Ascending aorta (tissue), 2 donors: ENCODE measurements at regions of chr20 and their contacts with region 1.

Region 1: GRCh38 chr20:36550797-36551299 is 9.5 kb downstream of the MYL9 start:
- DNase-seq: no peak
- H3K4me3 ChIP-seq: no peak overlapping the region
- H3K27ac ChIP-seq: peak overlapping the region; percentile 72 to 75
- H3K4me1 ChIP-seq: peaks cover 5 to 30% of the 10 kb centered on the region in 2 donors
- H3K27me3 ChIP-seq: no peaks in the 10 kb centered on the region
- CTCF ChIP-seq: no peak

Region 2: GRCh38 chr20:36248836-36249235 is 302.0 kb before region 1 on chr20:
- intact Hi-C with region 1: no loop called
- DNase-seq: no peak
- H3K4me3 ChIP-seq: no peak overlapping the region
- H3K27ac ChIP-seq: no peak overlapping the region
- H3K4me1 ChIP-seq: no peaks in the 10 kb centered on the region
- H3K27me3 ChIP-seq: no peaks in the 10 kb centered on the region
- CTCF ChIP-seq: no peak

Region 3: GRCh38 chr20:36573103-36573794 is 22.4 kb after region 1 on chr20 and contains the start of gene TGIF2:
- intact Hi-C with region 1: loop called (anchors 2 kb)
- DNase-seq: peak; percentile 49 to 93
- H3K4me3 ChIP-seq: peak within 1 kb of the TSS; percentile 63 to 79
- H3K27ac ChIP-seq: peak within 1 kb of the TSS; percentile 83 to 90
- H3K4me1 ChIP-seq: peaks cover 0 to 20% of the 10 kb centered on the region in 2 donors
- H3K27me3 ChIP-seq: no peaks in the 10 kb centered on the region
- CTCF ChIP-seq: no peak
- total RNA-seq, gene TGIF2: 29.8 TPM

Region 4: GRCh38 chr20:36591854-36592641 is 41.2 kb after region 1 on chr20:
- intact Hi-C with region 1: loop called (anchors 5 kb)
- DNase-seq: no peak
- H3K4me3 ChIP-seq: no peak overlapping the region
- H3K27ac ChIP-seq: no peak overlapping the region
- H3K4me1 ChIP-seq: no peaks in the 10 kb centered on the region
- H3K27me3 ChIP-seq: no peaks in the 10 kb centered on the region
- CTCF ChIP-seq: peak; percentile 14 to 48 (median 41)

Region 5: GRCh38 chr20:36754656-36755222 is 203.9 kb after region 1 on chr20:
- intact Hi-C with region 1: loop called (anchors 1 kb)
- DNase-seq: peak in 1 of 2 donors; percentile 67
- H3K4me3 ChIP-seq: no peak overlapping the region
- H3K27ac ChIP-seq: no peak overlapping the region
- H3K4me1 ChIP-seq: no peaks in the 10 kb centered on the region
- H3K27me3 ChIP-seq: no peaks in the 10 kb centered on the region
- CTCF ChIP-seq: peak; percentile 81 to 87 (median 84)

Region 6: DNA sequence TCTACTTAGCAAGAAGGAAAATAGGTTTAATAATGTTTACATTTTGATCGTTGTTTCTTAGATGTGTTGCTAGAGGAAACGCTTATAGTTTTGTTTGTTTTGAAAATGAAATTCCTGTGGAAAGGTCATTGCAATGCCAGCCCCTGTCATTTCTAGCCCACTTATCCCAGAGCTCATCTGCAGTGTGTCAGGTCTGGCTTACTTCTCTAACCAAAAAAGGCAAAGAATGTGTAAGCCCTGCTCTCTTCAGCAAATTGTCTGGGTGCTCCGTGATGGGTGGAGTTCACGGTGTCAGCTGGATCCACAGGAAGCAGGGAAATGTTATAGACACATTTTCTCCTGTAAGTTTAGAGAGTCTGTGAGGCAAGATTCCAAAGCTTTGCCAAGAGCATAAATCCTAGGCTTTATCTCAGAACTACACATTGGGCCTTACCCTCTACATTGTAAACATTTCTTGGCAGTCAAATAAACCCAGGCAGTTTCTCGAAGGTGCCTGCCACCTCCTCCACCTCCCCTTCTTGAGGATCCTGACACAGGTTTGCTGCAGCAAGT is 1533.6 kb after region 1 on chr20:
- intact Hi-C with region 1: no loop called
- DNase-seq: no peak
- H3K4me3 ChIP-seq: peak overlapping the region in 1 of 2 donors; percentile 24
- H3K27ac ChIP-seq: peak overlapping the region; percentile 70 to 72
- H3K4me1 ChIP-seq: peaks cover 12 to 17% of the 10 kb centered on the region in 2 donors
- H3K27me3 ChIP-seq: no peaks in the 10 kb centered on the region
- CTCF ChIP-seq: no peak